Activated CD4-positive, alpha-beta T cell treated with anti-CD3 and anti-CD28 coated beads for 36 hours (primary cell): ENCODE measurements at regions of chr17 and their contacts with region 1.

Region 1: DNA sequence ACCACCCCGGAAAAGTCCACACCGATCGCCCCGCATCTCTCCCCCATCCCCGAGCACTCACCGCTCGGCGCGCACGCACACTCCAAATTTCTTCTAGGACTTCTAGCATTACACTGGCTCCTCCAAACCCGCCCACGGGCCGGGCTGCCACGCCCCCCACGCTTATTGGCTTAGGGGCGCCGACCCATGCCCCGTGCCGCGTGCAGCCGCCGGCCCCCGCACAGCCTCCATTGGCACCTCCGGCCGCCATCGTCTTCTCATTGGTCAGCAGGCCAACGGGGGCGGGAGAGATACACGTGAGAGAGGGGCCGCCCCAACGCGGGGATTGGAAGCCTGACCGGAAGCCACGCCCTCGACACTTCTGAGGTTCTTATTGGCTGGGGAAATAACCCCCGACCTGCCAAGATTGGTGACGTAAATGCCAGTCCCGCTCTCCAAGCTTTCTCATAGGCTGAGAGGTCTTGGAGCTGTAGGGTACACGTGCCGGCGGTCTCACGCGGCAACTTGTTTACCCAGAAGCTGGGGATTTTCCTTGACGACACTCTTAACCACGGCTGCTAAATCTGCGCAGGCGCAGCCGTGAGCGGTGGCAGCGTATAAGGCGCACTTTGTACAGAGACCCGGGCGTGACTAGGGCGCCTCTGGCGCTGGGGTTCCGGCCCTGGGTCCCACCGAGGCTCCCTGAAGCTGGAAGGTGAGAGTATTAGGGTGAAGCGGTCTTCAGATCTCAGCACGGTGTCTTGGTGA is 4.2 kb upstream of the PER1 start:
- DNase-seq: peak; percentile 100
- ATAC-seq: peak; percentile 75
- H3K4me3 Mint-ChIP-seq: no peak overlapping the region
- H3K27ac Mint-ChIP-seq: no peak overlapping the region
- H3K4me1 Mint-ChIP-seq: peaks cover 49% of the 10 kb centered on the region
- H3K27me3 Mint-ChIP-seq: no peaks in the 10 kb centered on the region

Region 2: GRCh38 chr17:7329374-7329996 is 826.9 kb before region 1 on chr17:
- CTCF ChIA-PET with region 1: no interaction called
- POLR2A ChIA-PET with region 1: no interaction called
- intact Hi-C with region 1: loop called in 1 of 2 experiments (anchors 1 kb)
- DNase-seq: peak; percentile 98
- ATAC-seq: peak; percentile 69
- H3K4me3 Mint-ChIP-seq: peak overlapping the region; percentile 89
- H3K27ac Mint-ChIP-seq: peak overlapping the region; percentile 96
- H3K4me1 Mint-ChIP-seq: peaks cover 44% of the 10 kb centered on the region
- H3K27me3 Mint-ChIP-seq: no peaks in the 10 kb centered on the region

Region 3: GRCh38 chr17:7887482-7888183 is 268.8 kb before region 1 on chr17:
- CTCF ChIA-PET with region 1: no interaction called
- POLR2A ChIA-PET with region 1: no interaction called
- intact Hi-C with region 1: loop called in 1 of 2 experiments (anchors 2 kb)
- DNase-seq: peak; percentile 94
- ATAC-seq: peak; percentile 79
- H3K4me3 Mint-ChIP-seq: no peak overlapping the region
- H3K27ac Mint-ChIP-seq: no peak overlapping the region
- H3K4me1 Mint-ChIP-seq: peaks cover 4% of the 10 kb centered on the region
- H3K27me3 Mint-ChIP-seq: no peaks in the 10 kb centered on the region

Region 4: GRCh38 chr17:8125157-8125946 is 31.1 kb before region 1 on chr17:
- CTCF ChIA-PET with region 1: interaction called, 88 read pairs
- POLR2A ChIA-PET with region 1: interaction called, 5 read pairs
- intact Hi-C with region 1: loop called (anchors 1 kb)
- DNase-seq: peak; percentile 92
- ATAC-seq: peak; percentile 16
- H3K4me3 Mint-ChIP-seq: peak overlapping the region; percentile 90
- H3K27ac Mint-ChIP-seq: peak overlapping the region; percentile 79
- H3K4me1 Mint-ChIP-seq: peaks cover 51% of the 10 kb centered on the region
- H3K27me3 Mint-ChIP-seq: peaks cover 19% of the 10 kb centered on the region

Region 5: GRCh38 chr17:8173056-8173870 is 16.8 kb after region 1 on chr17:
- CTCF ChIA-PET with region 1: interaction called, 7 read pairs
- POLR2A ChIA-PET with region 1: interaction called, 85 read pairs
- intact Hi-C with region 1: loop called (anchors 1 kb)
- DNase-seq: peak; percentile 91
- ATAC-seq: peak; percentile 87
- H3K4me3 Mint-ChIP-seq: peak overlapping the region; percentile 78
- H3K27ac Mint-ChIP-seq: peak overlapping the region; percentile 96
- H3K4me1 Mint-ChIP-seq: peaks cover 40% of the 10 kb centered on the region
- H3K27me3 Mint-ChIP-seq: no peaks in the 10 kb centered on the region

Region 6: GRCh38 chr17:8294814-8295316 is 138.4 kb after region 1 on chr17:
- CTCF ChIA-PET with region 1: no interaction called
- POLR2A ChIA-PET with region 1: no interaction called
- intact Hi-C with region 1: loop called in 1 of 2 experiments (anchors 1 kb)
- DNase-seq: no peak
- ATAC-seq: no peak
- H3K4me3 Mint-ChIP-seq: peak overlapping the region; percentile 76
- H3K27ac Mint-ChIP-seq: peak overlapping the region; percentile 90
- H3K4me1 Mint-ChIP-seq: peaks cover 17% of the 10 kb centered on the region
- H3K27me3 Mint-ChIP-seq: no peaks in the 10 kb centered on the region

Region 7: GRCh38 chr17:8326511-8327302 is 170.3 kb after region 1 on chr17:
- CTCF ChIA-PET with region 1: no interaction called
- POLR2A ChIA-PET with region 1: no interaction called
- intact Hi-C with region 1: no loop called
- DNase-seq: peak; percentile 52
- ATAC-seq: peak; percentile 70
- H3K4me3 Mint-ChIP-seq: peak overlapping the region; percentile 58
- H3K27ac Mint-ChIP-seq: no peak overlapping the region
- H3K4me1 Mint-ChIP-seq: peaks cover 9% of the 10 kb centered on the region
- H3K27me3 Mint-ChIP-seq: peaks cover 33% of the 10 kb centered on the region